ENCODE measurements at regions of chr6 and their contacts with region 1.

Region 1: DNA sequence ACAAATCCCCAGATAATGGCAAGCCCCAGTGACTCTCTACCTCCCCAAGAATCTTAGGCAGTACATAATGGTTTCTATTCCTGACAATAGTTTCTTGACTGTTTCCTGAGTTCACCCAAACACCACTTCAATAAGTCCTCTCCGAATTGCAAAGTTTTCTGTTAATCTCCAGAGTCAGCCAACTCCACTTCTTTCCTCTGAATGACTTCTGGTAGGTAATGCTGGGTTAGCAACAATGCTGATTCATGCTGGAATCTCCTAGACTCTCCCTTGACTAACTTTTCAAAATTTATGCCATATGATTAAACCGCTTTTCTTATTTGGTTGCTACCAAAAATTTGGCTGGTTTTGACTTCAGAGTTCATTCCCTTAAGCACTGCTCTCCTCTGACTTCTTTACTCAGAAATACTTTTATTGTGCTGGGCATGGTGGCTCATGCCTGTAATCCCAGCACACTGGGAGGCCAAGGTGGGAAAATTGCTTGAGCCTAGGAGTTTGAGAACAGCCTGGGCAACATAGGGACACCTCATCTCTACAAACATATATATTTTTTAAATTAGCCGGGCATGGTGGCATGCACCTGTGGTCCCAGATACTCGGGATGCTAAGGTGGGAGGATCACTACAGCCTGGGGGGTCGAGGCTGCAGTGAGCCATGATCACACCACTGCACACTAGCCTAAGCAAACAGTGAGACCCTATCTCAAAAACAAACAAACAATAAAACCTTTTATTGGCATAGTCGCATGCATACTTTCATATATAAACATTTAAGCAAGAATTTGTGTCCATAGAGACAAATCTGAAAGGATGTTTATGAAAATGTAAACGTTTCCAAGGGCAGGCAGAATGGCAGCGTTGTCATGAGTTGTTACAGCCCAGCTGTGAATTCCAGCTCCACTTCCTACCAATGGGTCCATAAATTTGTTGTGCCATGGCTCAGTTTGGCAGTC is 249.3 kb upstream of the PLN start:
- DNase-seq: no peak

Region 2: GRCh38 chr6:118537574-118537973 is 238.8 kb after region 1 on chr6:
- intact Hi-C with region 1: loop called (anchors 5 kb)
- DNase-seq: no peak

Region 3: DNA sequence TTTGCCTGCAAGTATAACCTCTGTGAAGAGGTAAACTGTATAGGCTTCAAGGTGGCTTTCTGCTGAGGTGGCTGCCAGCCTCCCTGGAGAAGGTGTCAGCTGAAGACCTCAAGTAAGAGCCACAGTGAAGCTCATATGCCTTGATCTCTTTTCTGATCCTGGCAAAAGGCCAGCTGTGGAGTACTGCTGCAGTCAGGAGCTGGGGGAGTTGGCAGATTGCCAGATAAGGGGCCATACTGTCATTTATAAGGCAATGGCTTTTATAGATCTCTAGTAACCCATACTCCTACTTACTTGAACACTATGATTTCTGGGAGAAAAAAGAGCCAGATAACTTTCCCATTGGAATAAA is 361.4 kb after region 1 on chr6:
- intact Hi-C with region 1: no loop called
- DNase-seq: no peak

Measured in cardiac septum (tissue), 1 donor.